ENCODE measurements at regions of chr2 and their contacts with region 1.

Region 1: GRCh38 chr2:197057959-197058358 is 131.5 kb upstream of the PGAP1 start:
- DNase-seq: no peak
- ATAC-seq: no peak
- H3K4me3 ChIP-seq: no peak overlapping the region
- H3K27ac ChIP-seq: no peak overlapping the region
- H3K4me1 ChIP-seq: no peaks in the 10 kb centered on the region
- H3K27me3 ChIP-seq: no peaks in the 10 kb centered on the region
- CTCF ChIP-seq: no peak
- EP300 ChIP-seq: no peak
- POLR2A ChIP-seq: no peak
- RAD21 ChIP-seq: no peak

Region 2: DNA sequence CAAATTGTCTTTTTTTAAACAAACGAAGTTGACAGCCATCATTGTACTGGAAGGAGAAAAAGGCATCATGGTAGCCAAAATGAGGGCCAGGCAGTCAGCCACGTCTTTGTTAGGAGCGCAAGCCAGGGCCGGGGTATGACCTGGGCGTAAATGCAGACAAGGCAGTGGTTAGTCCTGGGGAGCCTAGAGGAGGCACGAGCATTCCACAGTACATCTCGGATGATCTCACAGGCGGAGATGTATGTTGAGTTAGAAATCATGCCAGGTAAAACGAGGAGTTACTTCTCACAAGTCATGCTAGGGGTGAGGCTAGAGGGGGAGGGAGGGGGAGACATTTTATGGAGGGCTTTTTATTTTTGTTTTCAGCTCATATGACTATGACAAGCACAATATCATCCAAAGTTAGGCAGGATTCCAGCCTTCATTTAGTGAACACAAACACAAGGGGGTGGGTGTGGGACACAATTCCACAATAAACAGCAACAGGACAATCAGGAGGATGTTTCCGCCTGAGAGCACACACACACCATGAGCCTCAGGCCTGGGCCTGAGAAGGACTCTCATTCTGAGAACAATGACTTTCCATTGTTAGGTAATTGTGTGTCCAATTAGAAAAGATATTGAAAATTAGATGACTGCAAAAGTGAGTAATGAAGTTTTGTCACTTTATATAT is 67.0 kb before region 1 on chr2:
- CTCF ChIA-PET with region 1: no interaction called
- POLR2A ChIA-PET with region 1: no interaction called
- RAD21 ChIA-PET with region 1: no interaction called
- SMC1A ChIA-PET with region 1: no interaction called
- in situ Hi-C with region 1: no loop called
- intact Hi-C with region 1: no loop called
- DNase-seq: no peak
- ATAC-seq: no peak
- H3K4me3 ChIP-seq: no peak overlapping the region
- H3K27ac ChIP-seq: no peak overlapping the region
- H3K4me1 ChIP-seq: no peaks in the 10 kb centered on the region
- H3K27me3 ChIP-seq: no peaks in the 10 kb centered on the region
- CTCF ChIP-seq: no peak
- EP300 ChIP-seq: no peak
- POLR2A ChIP-seq: no peak
- RAD21 ChIP-seq: no peak

Region 3: GRCh38 chr2:197045115-197045514 is 12.8 kb before region 1 on chr2:
- CTCF ChIA-PET with region 1: interaction called, 12 read pairs
- POLR2A ChIA-PET with region 1: interaction called, 3 read pairs
- RAD21 ChIA-PET with region 1: interaction called, 5 read pairs
- SMC1A ChIA-PET with region 1: no interaction called
- in situ Hi-C with region 1: no loop called
- intact Hi-C with region 1: no loop called
- DNase-seq: no peak
- ATAC-seq: no peak
- H3K4me3 ChIP-seq: no peak overlapping the region
- H3K27ac ChIP-seq: no peak overlapping the region
- H3K4me1 ChIP-seq: no peaks in the 10 kb centered on the region
- H3K27me3 ChIP-seq: no peaks in the 10 kb centered on the region
- CTCF ChIP-seq: no peak
- EP300 ChIP-seq: no peak
- POLR2A ChIP-seq: no peak
- RAD21 ChIP-seq: no peak

Measured in GM12878 (cell line).